GM23248 (cell line): ENCODE measurements at regions of chr10 and their contacts with region 1.

Region 1: GRCh38 chr10:91367127-91367531 is 43.0 kb upstream of the HECTD2 start:
- DNase-seq: peak; percentile 6
- H3K4me3 ChIP-seq: no peak overlapping the region
- H3K27ac ChIP-seq: no peak overlapping the region
- H3K4me1 ChIP-seq: no peaks in the 10 kb centered on the region; the same call in 1 of the 2 replicates
- H3K27me3 ChIP-seq: no peaks in the 10 kb centered on the region

Region 2: DNA sequence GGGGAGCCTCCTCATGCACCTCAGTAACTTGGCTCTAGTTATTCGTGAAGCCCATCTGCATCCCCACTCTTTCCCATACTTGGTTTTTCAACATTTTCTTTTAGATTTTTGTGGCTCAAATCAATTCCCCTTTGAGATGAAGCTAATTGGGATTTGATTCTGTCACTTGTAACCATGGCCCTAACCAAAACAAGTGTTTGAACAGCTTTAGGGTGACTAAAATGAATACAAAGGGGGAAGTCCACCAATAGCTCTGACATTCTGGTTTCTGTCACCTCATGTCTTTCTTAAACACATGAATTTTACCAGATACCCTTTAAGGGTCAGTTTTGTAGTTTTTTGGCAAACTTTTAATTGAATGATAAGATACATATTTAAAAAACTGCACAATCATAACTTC is 59.6 kb before region 1 on chr10:
- in situ Hi-C with region 1: loop called (anchors 10 kb)
- DNase-seq: no peak
- H3K4me3 ChIP-seq: no peak overlapping the region
- H3K27ac ChIP-seq: no peak overlapping the region
- H3K4me1 ChIP-seq: no peaks in the 10 kb centered on the region
- H3K27me3 ChIP-seq: no peaks in the 10 kb centered on the region